A673 (cell line): ENCODE measurements at regions of chr2 and their contacts with region 1.

Region 1: DNA sequence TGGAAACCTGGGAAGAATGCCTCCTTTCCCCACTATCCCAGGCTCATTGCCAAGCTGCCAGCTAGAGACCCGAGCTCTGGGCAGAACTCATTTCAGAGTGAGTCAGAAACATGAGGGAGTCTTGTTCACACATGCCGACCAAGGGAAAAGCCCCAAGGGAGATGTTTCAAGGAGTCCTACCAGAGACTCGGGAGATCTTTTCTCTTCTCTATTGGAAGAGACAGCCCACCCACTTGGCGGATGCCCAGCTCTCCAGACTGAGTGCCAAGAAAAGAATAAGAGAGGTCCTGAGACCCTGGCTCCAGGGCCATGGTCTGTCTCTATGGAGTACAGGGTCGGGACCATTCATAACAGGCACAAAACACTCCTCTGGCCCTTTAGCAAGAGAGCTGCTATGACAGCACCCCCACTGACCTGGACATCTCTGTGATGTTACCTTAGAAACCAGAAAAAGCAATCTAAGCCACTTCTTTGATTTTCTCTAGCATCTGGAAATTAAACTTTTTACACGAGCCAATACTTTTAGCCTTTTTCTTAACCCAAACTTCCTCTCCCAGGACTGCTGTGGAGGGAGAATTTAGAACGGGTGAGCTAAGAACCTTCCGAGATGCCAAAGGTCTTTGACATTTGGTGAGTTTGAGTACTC is 18.5 kb upstream of the IGFBP5 start:
- DNase-seq: peak; percentile 90
- H3K4me3 ChIP-seq: no peak overlapping the region
- H3K27ac ChIP-seq: no peak overlapping the region
- H3K4me1 ChIP-seq: peaks cover 10% of the 10 kb centered on the region
- H3K27me3 ChIP-seq: no peaks in the 10 kb centered on the region
- CTCF ChIP-seq: no peak

Region 2: GRCh38 chr2:218066926-218067515 is 1353.2 kb after region 1 on chr2:
- CTCF ChIA-PET with region 1: interaction called, 10 read pairs
- POLR2A ChIA-PET with region 1: no interaction called
- intact Hi-C with region 1: no loop called
- DNase-seq: no peak
- H3K4me3 ChIP-seq: no peak overlapping the region
- H3K27ac ChIP-seq: no peak overlapping the region
- H3K4me1 ChIP-seq: no peaks in the 10 kb centered on the region
- H3K27me3 ChIP-seq: no peaks in the 10 kb centered on the region
- CTCF ChIP-seq: no peak